ENCODE measurements at regions of chr6 and their contacts with region 1.

Region 1: DNA sequence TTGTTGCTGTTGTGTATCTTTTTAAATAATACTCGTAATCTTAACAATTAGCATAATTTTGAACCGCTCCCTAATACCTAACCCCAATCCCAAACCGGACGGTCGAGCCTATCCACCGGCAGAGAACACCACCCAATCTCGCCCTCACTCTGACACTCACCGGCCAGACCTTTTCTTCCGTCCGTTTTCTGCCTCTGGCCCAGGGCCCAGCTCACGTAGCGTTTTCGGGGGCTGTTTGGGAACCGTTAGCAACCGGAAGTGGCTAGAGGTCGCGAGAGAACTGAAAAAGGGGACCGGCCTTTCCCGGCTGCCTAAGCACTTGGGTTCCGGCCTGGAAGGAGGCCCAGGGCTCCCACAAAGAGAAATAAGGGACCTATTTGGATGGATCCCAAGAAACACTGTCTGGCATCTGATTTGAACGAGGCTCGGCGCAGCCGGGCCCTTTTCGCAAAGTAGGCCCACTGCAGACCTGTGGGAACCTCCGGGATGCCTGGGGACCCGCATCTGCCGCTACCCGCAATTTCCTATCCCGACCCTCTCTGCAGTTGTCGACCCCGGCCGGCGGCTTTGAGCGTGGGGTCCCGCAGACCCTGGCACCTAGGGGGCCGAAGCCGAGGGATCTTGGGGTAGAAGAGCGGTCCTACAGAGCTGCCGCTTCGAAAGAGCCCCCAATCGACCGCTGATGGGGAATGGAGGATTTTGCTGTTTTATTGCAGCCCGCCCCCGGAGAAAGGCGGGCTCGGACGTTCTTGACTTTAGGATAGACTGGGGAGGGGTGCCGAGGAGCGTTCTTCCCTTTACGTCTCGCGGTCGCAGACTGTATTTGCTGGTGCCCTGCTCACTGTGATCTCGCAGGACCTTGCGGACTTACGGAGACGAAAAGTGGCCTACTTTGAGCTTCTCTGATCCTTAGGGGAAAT is 4.8 kb upstream of the ZKSCAN8 start:
- DNase-seq: peak; percentile 95
- H3K4me3 Mint-ChIP-seq: peak overlapping the region; percentile 99
- H3K27ac Mint-ChIP-seq: peak overlapping the region; percentile 100
- H3K4me1 Mint-ChIP-seq: peaks cover 29% of the 10 kb centered on the region
- H3K27me3 Mint-ChIP-seq: no peaks in the 10 kb centered on the region
- CTCF ChIP-seq: no peak

Region 2: DNA sequence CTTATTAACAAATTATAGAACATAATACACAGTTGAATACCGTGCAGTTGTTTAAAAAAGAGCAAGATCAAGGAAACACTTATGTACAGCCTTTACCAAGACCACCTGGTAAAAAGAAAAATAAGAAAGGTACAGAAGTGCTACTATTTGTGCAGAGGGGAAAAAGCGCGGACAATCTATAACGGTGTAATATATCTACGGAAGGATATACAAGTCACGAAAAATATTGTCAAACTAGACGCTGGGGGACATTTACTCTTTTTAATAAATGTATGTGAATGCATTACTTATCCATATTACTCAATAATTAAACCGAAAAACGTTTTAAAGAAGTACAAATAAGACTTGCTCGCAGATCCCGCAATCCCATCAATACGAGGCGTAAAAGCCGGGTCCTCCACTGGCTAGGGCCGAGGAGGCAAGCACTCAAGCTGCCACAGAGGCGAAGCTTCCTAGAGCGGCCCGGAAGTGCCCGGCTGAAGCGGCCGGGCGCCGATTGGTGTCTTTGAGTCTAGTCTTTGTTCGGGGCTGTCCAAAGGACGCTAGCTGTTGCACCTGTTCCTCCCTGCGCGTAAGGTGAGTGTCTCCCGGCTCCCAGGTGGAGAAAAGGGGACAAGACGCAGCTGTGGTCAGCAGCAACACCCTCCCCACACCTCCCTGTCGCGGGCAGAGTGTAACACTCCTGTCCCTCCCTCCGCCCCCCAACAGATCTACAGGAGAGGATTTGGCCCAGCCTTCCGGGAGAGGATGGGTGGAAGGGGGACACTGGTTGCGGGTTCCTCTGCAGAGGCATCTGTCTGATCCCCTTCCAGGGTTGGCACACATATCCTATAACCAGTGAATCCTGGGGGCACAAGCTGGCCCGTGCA is 12.5 kb before region 1 on chr6 and contains the start of gene ZSCAN16:
- CTCF ChIA-PET with region 1: interaction called, 4 read pairs
- POLR2A ChIA-PET with region 1: interaction called, 112 read pairs
- intact Hi-C with region 1: no loop called
- DNase-seq: peak; percentile 85
- H3K4me3 Mint-ChIP-seq: peak within 1 kb of the TSS; percentile 84
- H3K27ac Mint-ChIP-seq: peak within 1 kb of the TSS; percentile 87
- H3K4me1 Mint-ChIP-seq: peaks cover 41% of the 10 kb centered on the region
- H3K27me3 Mint-ChIP-seq: no peaks in the 10 kb centered on the region
- CTCF ChIP-seq: no peak
- total RNA-seq, gene ZSCAN16: 2.6 and 4.4 TPM in 2 replicates

Region 3: GRCh38 chr6:28212510-28213212 is 75.8 kb after region 1 on chr6:
- CTCF ChIA-PET with region 1: interaction called, 3 read pairs
- POLR2A ChIA-PET with region 1: interaction called, 37 read pairs
- intact Hi-C with region 1: loop called (anchors 1 kb)
- DNase-seq: peak; percentile 90
- H3K4me3 Mint-ChIP-seq: peak overlapping the region; percentile 72
- H3K27ac Mint-ChIP-seq: peak overlapping the region; percentile 85
- H3K4me1 Mint-ChIP-seq: peaks cover 14% of the 10 kb centered on the region
- H3K27me3 Mint-ChIP-seq: no peaks in the 10 kb centered on the region
- CTCF ChIP-seq: no peak

Region 4: GRCh38 chr6:28252009-28252975 is 115.4 kb after region 1 on chr6 and contains the start of gene ZKSCAN4:
- CTCF ChIA-PET with region 1: interaction called, 3 read pairs
- POLR2A ChIA-PET with region 1: interaction called, 48 read pairs
- intact Hi-C with region 1: no loop called
- DNase-seq: peak; percentile 91
- H3K4me3 Mint-ChIP-seq: peak within 1 kb of the TSS; percentile 93
- H3K27ac Mint-ChIP-seq: peak within 1 kb of the TSS; percentile 83
- H3K4me1 Mint-ChIP-seq: peaks cover 7% of the 10 kb centered on the region
- H3K27me3 Mint-ChIP-seq: no peaks in the 10 kb centered on the region
- CTCF ChIP-seq: no peak
- total RNA-seq, gene ZKSCAN4: 3.3 and 4.8 TPM in 2 replicates

Region 5: DNA sequence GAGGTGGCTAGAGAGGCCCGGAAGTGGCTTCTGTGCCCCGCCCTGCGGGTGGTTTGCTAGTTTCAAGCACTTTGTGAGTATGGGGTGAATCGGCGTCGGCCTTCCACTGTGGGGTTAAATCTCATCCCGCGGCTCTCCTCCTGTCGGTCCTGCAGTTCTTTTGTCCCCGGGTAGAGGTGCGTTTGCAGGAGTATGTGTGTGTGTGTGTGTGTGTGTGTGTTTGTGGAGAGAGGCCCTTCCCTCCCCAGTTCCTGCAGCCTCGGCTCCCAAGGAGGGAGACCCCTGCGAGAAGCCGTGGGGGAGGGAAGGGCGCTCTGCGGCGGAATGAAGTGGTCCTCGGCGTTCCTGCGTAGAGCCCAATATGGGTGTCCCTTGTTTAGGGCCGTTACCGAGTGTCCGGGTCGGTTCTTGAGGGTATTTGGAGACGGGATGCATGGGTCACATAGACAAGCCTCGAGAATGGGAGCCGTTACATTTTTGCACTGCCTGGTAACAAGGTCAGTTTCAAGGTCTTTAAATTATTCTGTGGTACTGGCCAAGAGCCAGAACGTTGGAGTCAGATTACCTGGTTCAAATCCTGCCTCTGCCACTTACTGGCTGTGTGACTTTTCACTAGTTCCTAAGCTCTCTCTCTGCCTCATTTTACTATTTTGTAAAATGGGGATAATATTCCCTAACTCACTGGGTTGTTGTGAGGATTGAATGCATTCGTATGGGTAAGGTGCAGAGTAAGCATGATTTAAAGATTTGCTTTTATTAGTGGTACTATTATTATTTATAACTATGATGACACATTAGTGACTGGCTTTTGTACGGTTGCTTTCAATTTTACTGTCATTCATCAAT is 213.3 kb after region 1 on chr6 and contains the start of gene ZKSCAN3:
- CTCF ChIA-PET with region 1: interaction called, 16 read pairs
- POLR2A ChIA-PET with region 1: interaction called, 26 read pairs
- intact Hi-C with region 1: no loop called
- DNase-seq: peak; percentile 82
- H3K4me3 Mint-ChIP-seq: peak within 1 kb of the TSS; percentile 99
- H3K27ac Mint-ChIP-seq: peak within 1 kb of the TSS; percentile 93
- H3K4me1 Mint-ChIP-seq: peaks cover 12% of the 10 kb centered on the region
- H3K27me3 Mint-ChIP-seq: peaks cover 20% of the 10 kb centered on the region
- CTCF ChIP-seq: no peak
- total RNA-seq, gene ZKSCAN3: 2.7 and 3.7 TPM in 2 replicates

Region 6: DNA sequence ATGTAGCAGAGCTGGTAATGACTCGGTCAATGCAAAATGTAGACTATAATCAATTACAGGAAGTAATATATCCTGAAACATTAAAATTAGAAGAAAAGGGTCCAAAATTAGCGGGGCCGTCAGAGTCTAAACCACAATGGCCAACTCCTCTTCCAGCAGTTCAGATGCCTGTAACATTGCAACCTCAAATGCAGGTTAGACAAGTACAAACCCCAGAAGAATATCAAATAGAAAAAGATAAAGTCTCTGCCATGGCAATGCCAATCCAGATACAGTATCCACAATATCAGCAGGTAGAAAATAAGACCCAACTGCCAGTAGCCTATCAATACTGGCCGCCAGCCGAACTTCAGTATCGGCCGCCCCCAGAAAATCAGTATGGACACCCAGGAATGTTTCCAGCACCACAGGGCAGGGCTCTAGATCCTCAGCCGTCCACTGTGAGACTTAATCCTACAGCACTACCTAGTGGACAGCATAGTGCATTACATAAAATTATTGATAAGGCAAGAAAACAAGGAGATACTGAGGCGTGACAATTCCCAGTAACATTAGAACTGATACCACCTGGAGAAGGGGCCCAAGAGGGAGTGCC is 547.2 kb after region 1 on chr6:
- CTCF ChIA-PET with region 1: no interaction called
- POLR2A ChIA-PET with region 1: no interaction called
- intact Hi-C with region 1: loop called (anchors 10 kb)
- DNase-seq: peak; percentile 70
- H3K4me3 Mint-ChIP-seq: no peak overlapping the region
- H3K27ac Mint-ChIP-seq: no peak overlapping the region
- H3K4me1 Mint-ChIP-seq: peaks cover 19% of the 10 kb centered on the region
- H3K27me3 Mint-ChIP-seq: no peaks in the 10 kb centered on the region
- CTCF ChIP-seq: peak; percentile 77